Heart left ventricle (tissue), 16 donors: ENCODE measurements at regions of chr1 and their contacts with region 1.

Region 1: DNA sequence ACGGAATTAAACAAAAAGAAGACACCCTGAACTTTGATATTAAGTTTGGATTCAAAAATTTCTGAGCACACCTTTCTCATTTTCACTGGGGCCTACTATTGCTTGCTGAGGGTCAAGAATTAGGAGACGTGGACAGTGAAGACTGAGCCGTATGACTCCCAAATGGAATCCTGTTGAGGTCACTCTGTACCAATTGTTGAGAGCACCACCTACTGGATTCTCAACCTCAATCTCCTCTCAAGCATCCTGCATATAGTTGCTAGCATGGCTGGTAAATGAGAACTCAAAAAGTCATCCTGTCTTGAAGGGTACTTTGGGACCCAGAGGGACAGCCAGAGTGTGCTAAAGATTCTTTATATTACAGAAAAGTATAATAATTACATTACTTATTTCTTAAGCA is 20.2 kb upstream of the MTR start:
- DNase-seq: no peak
- ATAC-seq: peak; percentile 50 to 70 (median 55)
- H3K4me3 ChIP-seq: no peak overlapping the region
- H3K27ac ChIP-seq: no peak overlapping the region
- H3K4me1 ChIP-seq: no peaks in the 10 kb centered on the region
- H3K27me3 ChIP-seq: no peaks in the 10 kb centered on the region
- CTCF ChIP-seq: peak in 8 of 12 donors; percentile 20 to 50 (median 44)
- POLR2A ChIP-seq: no peak

Region 2: GRCh38 chr1:236603991-236604904 is 170.7 kb before region 1 on chr1 and contains the start of gene HEATR1:
- intact Hi-C with region 1: loop called in 1 of 10 experiments (anchors 10 kb)
- DNase-seq: peak; percentile 95 to 96 (median 95)
- ATAC-seq: peak; percentile 93 to 99 (median 98)
- H3K4me3 ChIP-seq: peak within 1 kb of the TSS; percentile 50 to 96 (median 80)
- H3K27ac ChIP-seq: peak within 1 kb of the TSS in 11 of 12 donors; percentile 71 to 90 (median 85)
- H3K4me1 ChIP-seq: peaks cover 0 to 23% (median 13%) of the 10 kb centered on the region in 12 donors
- H3K27me3 ChIP-seq: no peaks in the 10 kb centered on the region
- CTCF ChIP-seq: no peak
- POLR2A ChIP-seq: peak in 1 of 2 donors; percentile 55
- total RNA-seq, gene HEATR1: 6.6 to 17.2 (median 11.8) TPM

Region 3: DNA sequence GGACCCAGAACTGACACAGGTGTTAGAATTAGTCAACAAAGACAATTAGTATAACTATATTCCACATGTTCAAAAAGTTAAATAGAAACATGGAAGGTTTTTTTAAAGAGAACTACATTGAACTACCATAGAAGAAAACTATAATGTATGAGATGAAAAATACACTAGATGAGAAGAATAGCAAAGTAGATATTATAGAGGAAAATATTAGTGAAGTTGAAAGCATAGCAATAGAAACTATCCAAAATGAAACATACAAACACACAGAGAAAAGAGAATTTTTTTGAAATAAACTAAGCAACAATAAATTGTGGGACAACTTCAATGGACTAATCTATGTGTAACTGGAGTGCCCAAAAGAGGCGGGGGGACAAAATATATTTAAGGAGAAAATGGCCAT is 162.6 kb before region 1 on chr1:
- intact Hi-C with region 1: loop called in 4 of 10 experiments (anchors 5 to 10 kb)
- DNase-seq: no peak
- ATAC-seq: no peak
- H3K4me3 ChIP-seq: no peak overlapping the region
- H3K27ac ChIP-seq: no peak overlapping the region
- H3K4me1 ChIP-seq: peaks cover 0 to 9% (median 0%) of the 10 kb centered on the region in 12 donors
- H3K27me3 ChIP-seq: peaks cover 0 to 15% (median 0%) of the 10 kb centered on the region in 9 donors
- CTCF ChIP-seq: no peak
- POLR2A ChIP-seq: no peak

Region 4: GRCh38 chr1:236619398-236619797 is 155.5 kb before region 1 on chr1:
- intact Hi-C with region 1: loop called in 3 of 10 experiments (anchors 5 to 10 kb)
- DNase-seq: no peak
- ATAC-seq: peak in 1 of 4 donors; percentile 30
- H3K4me3 ChIP-seq: no peak overlapping the region
- H3K27ac ChIP-seq: peak overlapping the region in 2 of 12 donors; percentile 24 to 28
- H3K4me1 ChIP-seq: peaks cover 0 to 7% (median 0%) of the 10 kb centered on the region in 12 donors
- H3K27me3 ChIP-seq: no peaks in the 10 kb centered on the region
- CTCF ChIP-seq: no peak
- POLR2A ChIP-seq: no peak

Region 5: DNA sequence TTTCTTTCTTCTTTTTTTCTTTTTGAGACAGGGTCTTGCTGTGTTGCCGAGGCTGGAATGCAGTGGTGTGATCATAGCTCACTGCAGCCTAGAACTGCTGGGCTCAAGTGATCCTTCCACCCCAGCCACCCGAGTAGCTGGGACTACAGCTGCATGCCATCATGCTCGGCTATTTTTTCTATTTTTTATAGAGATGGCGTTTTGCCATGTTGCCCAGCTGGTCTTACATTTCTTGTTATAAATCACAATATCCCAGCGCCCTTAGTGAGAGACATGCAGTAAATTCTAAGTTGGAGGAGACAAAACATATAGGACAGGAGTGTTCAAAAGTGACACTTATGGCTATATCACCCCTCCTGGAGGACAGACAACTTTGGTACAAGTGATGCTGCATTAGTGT is 120.0 kb before region 1 on chr1:
- intact Hi-C with region 1: no loop called
- DNase-seq: no peak
- ATAC-seq: peak in 1 of 4 donors; percentile 7
- H3K4me3 ChIP-seq: no peak overlapping the region
- H3K27ac ChIP-seq: no peak overlapping the region
- H3K4me1 ChIP-seq: peaks cover 0 to 11% (median 0%) of the 10 kb centered on the region in 12 donors
- H3K27me3 ChIP-seq: no peaks in the 10 kb centered on the region
- CTCF ChIP-seq: no peak
- POLR2A ChIP-seq: no peak

Region 6: DNA sequence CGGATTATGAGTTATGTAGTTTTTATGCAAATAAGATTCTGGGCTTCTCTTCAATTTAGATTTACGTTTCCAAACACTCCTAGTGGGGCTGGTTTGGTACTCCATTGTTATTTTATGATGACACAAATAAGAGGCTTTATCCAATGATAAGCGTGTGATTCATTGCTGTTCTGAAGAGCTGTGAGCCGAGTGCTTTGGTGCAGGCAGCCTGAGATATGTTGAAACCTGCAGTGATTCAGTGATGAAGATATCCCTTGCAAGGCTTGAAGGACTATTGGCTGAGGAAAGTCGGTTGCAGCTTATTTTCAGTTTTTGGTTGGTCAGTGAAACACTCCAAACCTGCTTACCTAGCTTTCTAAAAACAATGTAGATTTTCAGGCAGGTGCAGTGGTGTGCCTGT is 379.2 kb after region 1 on chr1:
- intact Hi-C with region 1: no loop called
- DNase-seq: no peak
- ATAC-seq: peak in 3 of 4 donors; percentile 27 to 77 (median 36)
- H3K4me3 ChIP-seq: no peak overlapping the region
- H3K27ac ChIP-seq: peak overlapping the region in 2 of 12 donors; percentile 10 to 36
- H3K4me1 ChIP-seq: peaks cover 0 to 79% (median 27%) of the 10 kb centered on the region in 12 donors
- H3K27me3 ChIP-seq: no peaks in the 10 kb centered on the region
- CTCF ChIP-seq: no peak
- POLR2A ChIP-seq: no peak